ENCODE measurements at regions of chr14 and their contacts with region 1.

Region 1: DNA sequence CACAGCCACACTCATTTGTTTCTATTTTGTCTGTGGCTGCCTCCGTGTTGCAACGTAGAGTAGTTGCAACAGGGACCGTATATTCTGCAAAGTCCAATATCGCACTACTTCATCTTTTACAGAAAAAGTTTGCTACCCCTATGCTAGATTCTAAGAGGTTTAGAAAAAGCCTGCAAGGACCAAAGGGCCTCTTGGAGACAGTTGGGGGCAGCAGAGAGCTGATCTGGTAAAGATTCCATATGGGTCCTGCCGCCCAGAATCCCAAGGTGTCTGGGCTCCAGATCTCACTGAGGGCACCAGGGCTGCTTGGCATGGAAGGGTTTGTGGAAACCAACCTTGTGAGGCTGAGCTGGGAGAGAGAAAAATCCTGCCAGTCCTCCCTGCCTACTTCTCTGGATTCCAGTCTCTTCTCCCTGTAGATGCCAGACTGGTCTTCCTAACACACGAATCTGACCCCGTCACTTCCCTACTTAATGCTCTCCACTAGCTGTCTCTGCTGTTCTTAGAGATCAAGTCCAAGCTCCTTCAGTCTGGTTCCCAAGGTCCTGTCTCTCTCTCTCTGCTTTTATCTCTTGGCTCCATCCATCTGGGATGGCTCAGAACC is 74.6 kb downstream of the GLRX5 start:
- DNase-seq: peak; percentile 52
- ATAC-seq: no peak
- H3K4me3 ChIP-seq: no peak overlapping the region
- H3K4me3 Mint-ChIP-seq: no peak overlapping the region
- H3K27ac ChIP-seq: no peak overlapping the region
- H3K27ac Mint-ChIP-seq: no peak overlapping the region
- H3K4me1 ChIP-seq: peaks cover 13 to 29% of the 10 kb centered on the region in 2 donors
- H3K4me1 Mint-ChIP-seq: peaks cover 31% of the 10 kb centered on the region
- H3K27me3 ChIP-seq: peaks cover 0 to 10% (median 3%) of the 10 kb centered on the region in 4 experiments
- H3K27me3 Mint-ChIP-seq: peaks cover 45% of the 10 kb centered on the region
- CTCF ChIP-seq: peak; percentile 51

Region 2: DNA sequence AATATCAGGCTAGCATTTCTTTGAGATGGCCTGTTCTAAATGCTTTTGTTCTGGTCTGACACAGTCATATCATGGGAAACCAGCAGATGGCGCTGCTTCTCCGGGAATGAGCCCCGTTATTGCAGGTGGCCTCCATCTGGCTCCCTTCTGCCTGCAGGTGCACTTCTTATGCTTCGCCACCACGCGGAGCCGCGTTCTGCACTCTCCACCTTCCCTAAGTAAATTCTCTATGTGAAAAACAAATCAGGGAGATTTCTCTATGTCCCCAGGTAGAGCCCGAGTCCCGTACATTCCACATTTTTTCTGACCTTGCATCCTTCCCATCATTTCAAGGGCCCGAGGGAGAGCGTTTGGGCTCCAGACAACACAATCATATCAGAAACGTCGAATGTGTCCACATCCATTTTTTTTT is 48.5 kb before region 1 on chr14:
- CTCF ChIA-PET with region 1: interaction called, 4 read pairs
- POLR2A ChIA-PET with region 1: no interaction called
- intact Hi-C with region 1: loop called (anchors 1 kb)
- DNase-seq: peak; percentile 91
- ATAC-seq: peak; percentile 97
- H3K4me3 ChIP-seq: no peak overlapping the region
- H3K4me3 Mint-ChIP-seq: no peak overlapping the region
- H3K27ac ChIP-seq: no peak overlapping the region
- H3K27ac Mint-ChIP-seq: peak overlapping the region; percentile 4
- H3K4me1 ChIP-seq: peaks cover 0 to 3% of the 10 kb centered on the region in 2 donors
- H3K4me1 Mint-ChIP-seq: peaks cover 4% of the 10 kb centered on the region
- H3K27me3 ChIP-seq: peaks cover 0 to 14% (median 6%) of the 10 kb centered on the region in 4 experiments
- H3K27me3 Mint-ChIP-seq: peaks cover 23% of the 10 kb centered on the region
- CTCF ChIP-seq: peak; percentile 99

Region 3: DNA sequence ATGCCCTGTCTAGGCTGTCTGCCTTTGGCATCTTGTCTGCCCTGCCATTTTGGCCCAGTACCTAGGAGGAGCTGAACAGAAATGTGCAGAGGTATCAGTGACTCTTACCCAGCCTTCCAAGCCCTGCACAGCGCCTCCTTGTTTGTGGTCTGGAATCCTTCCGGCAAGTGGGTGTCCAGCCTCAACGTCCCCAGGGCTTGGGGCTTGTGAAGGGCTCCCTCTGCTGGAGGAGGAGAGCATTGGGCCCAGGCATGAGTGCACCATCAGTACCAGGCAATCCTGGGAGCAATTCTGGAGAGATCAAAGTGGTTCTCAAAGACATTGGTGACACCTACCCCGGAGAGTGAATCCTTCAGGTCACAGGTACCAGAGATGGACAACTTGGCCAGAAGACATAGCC is 74.3 kb after region 1 on chr14:
- CTCF ChIA-PET with region 1: interaction called, 6 read pairs
- POLR2A ChIA-PET with region 1: no interaction called
- intact Hi-C with region 1: loop called (anchors 5 kb)
- DNase-seq: peak; percentile 53
- ATAC-seq: peak; percentile 56
- H3K4me3 ChIP-seq: no peak overlapping the region
- H3K4me3 Mint-ChIP-seq: no peak overlapping the region
- H3K27ac ChIP-seq: no peak overlapping the region
- H3K27ac Mint-ChIP-seq: no peak overlapping the region
- H3K4me1 ChIP-seq: peaks cover 61 to 68% of the 10 kb centered on the region in 2 donors
- H3K4me1 Mint-ChIP-seq: peaks cover 62% of the 10 kb centered on the region
- H3K27me3 ChIP-seq: no peaks in the 10 kb centered on the region
- H3K27me3 Mint-ChIP-seq: peaks cover 24% of the 10 kb centered on the region
- CTCF ChIP-seq: peak; percentile 57

Region 4: GRCh38 chr14:95692109-95692508 is 82.6 kb after region 1 on chr14:
- CTCF ChIA-PET with region 1: interaction called, 10 read pairs
- POLR2A ChIA-PET with region 1: interaction called, 6 read pairs
- intact Hi-C with region 1: loop called (anchors 5 kb)
- DNase-seq: no peak
- ATAC-seq: no peak
- H3K4me3 ChIP-seq: no peak overlapping the region
- H3K4me3 Mint-ChIP-seq: no peak overlapping the region
- H3K27ac ChIP-seq: peak overlapping the region in 1 of 2 donors; percentile 48
- H3K27ac Mint-ChIP-seq: peak overlapping the region; percentile 72
- H3K4me1 ChIP-seq: peaks cover 59 to 64% of the 10 kb centered on the region in 2 donors
- H3K4me1 Mint-ChIP-seq: peaks cover 59% of the 10 kb centered on the region
- H3K27me3 ChIP-seq: no peaks in the 10 kb centered on the region
- H3K27me3 Mint-ChIP-seq: peaks cover 33% of the 10 kb centered on the region
- CTCF ChIP-seq: no peak

Region 5: GRCh38 chr14:95697764-95698163 is 88.3 kb after region 1 on chr14:
- CTCF ChIA-PET with region 1: interaction called, 10 read pairs
- POLR2A ChIA-PET with region 1: interaction called, 6 read pairs
- intact Hi-C with region 1: loop called (anchors 5 kb)
- DNase-seq: peak; percentile 76
- ATAC-seq: peak; percentile 64
- H3K4me3 ChIP-seq: peak overlapping the region in 3 of 5 experiments; percentile 9 to 56 (median 16)
- H3K4me3 Mint-ChIP-seq: peak overlapping the region; percentile 81
- H3K27ac ChIP-seq: peak overlapping the region; percentile 87 to 94
- H3K27ac Mint-ChIP-seq: peak overlapping the region; percentile 95
- H3K4me1 ChIP-seq: peaks cover 100% of the 10 kb centered on the region in 2 donors
- H3K4me1 Mint-ChIP-seq: peaks cover 83% of the 10 kb centered on the region
- H3K27me3 ChIP-seq: no peaks in the 10 kb centered on the region
- H3K27me3 Mint-ChIP-seq: peaks cover 34% of the 10 kb centered on the region
- CTCF ChIP-seq: peak; percentile 19

Region 6: GRCh38 chr14:96349286-96350075 is 740.0 kb after region 1 on chr14:
- CTCF ChIA-PET with region 1: no interaction called
- POLR2A ChIA-PET with region 1: no interaction called
- intact Hi-C with region 1: no loop called
- DNase-seq: no peak
- ATAC-seq: no peak
- H3K4me3 ChIP-seq: no peak overlapping the region
- H3K4me3 Mint-ChIP-seq: no peak overlapping the region
- H3K27ac ChIP-seq: no peak overlapping the region
- H3K27ac Mint-ChIP-seq: no peak overlapping the region
- H3K4me1 ChIP-seq: no peaks in the 10 kb centered on the region
- H3K4me1 Mint-ChIP-seq: peaks cover under 1% of the 10 kb centered on the region
- H3K27me3 ChIP-seq: no peaks in the 10 kb centered on the region
- H3K27me3 Mint-ChIP-seq: no peaks in the 10 kb centered on the region
- CTCF ChIP-seq: no peak

Measured in B cell (primary cell).